Activated CD4-positive, alpha-beta T cell treated with anti-CD3 and anti-CD28 coated beads, Interleukin-2, amount 10 ng/mL, durations not matched to agents 7 days and 5 days (primary cell): ENCODE measurements at regions of chr14 and their contacts with region 1.

Region 1: GRCh38 chr14:24251880-24252288 is 9.5 kb upstream of the TINF2 start:
- DNase-seq: no peak
- H3K4me3 Mint-ChIP-seq: no peak overlapping the region
- H3K27ac Mint-ChIP-seq: peak overlapping the region; percentile 28
- H3K4me1 Mint-ChIP-seq: peaks cover 43% of the 10 kb centered on the region
- H3K27me3 Mint-ChIP-seq: no peaks in the 10 kb centered on the region

Region 2: GRCh38 chr14:24299255-24300195 is 47.6 kb after region 1 on chr14 and contains the starts of genes DHRS1 and NOP9:
- CTCF ChIA-PET with region 1: interaction called, 17 read pairs
- POLR2A ChIA-PET with region 1: no interaction called
- DNase-seq: peak; percentile 92
- H3K4me3 Mint-ChIP-seq: peak within 1 kb of the TSS; percentile 89
- H3K27ac Mint-ChIP-seq: peak within 1 kb of the TSS; percentile 93
- H3K4me1 Mint-ChIP-seq: peaks cover 53% of the 10 kb centered on the region
- H3K27me3 Mint-ChIP-seq: no peaks in the 10 kb centered on the region
- total RNA-seq, gene DHRS1: 31.7 to 35.0 TPM
- total RNA-seq, gene NOP9: 30.8 to 35.2 TPM